ENCODE measurements at regions of chr17 and their contacts with region 1.

Region 1: DNA sequence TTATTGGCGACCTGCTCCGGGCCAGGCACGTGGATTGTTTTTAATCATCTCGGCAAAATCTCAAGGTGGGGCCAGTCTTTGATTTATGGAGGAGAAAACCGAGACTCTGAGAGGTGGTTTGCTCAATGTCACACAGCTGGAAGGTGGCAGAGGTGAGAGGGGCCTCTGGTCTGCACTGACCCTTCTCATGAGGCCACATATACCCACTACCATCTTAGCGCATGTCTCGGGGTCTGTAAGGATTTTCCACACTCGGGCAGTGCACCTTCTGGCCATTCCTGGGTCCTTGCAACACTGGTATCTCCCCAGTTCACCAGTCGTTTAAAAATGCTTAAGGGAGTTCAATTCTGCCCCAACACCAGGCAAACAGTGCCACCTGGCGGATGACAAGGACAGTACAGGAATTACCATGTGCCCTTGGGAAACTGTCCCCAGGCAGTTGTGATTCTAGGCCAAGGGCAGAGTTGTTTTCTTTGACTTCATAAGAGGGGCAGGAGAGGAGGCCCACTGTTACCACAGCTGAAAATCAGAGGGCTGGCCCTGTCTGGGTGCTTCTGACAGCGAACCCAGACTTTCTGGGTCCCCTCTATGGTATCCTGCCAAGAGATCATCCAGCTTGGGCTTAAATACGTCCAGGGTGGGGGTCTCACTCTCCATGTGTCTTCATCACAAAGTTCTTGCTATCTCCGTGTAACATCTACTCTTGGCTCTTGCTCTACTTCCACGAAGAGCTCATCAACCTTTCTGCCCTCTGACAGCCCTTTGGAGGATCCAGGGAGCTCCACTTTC is 39.4 kb upstream of the RAI1 start:
- DNase-seq: peak; percentile 74
- H3K4me3 ChIP-seq: peak overlapping the region in 1 of 2 experiments; percentile 30; a peak in 1 of 4 replicates
- H3K27ac ChIP-seq: no peak overlapping the region
- H3K4me1 ChIP-seq: no peaks in the 10 kb centered on the region; a peak in 1 of 4 replicates
- H3K27me3 ChIP-seq: no peaks in the 10 kb centered on the region
- CTCF ChIP-seq: peak; percentile 86
- EP300 ChIP-seq: no peak
- RAD21 ChIP-seq: peak; percentile 97

Region 2: DNA sequence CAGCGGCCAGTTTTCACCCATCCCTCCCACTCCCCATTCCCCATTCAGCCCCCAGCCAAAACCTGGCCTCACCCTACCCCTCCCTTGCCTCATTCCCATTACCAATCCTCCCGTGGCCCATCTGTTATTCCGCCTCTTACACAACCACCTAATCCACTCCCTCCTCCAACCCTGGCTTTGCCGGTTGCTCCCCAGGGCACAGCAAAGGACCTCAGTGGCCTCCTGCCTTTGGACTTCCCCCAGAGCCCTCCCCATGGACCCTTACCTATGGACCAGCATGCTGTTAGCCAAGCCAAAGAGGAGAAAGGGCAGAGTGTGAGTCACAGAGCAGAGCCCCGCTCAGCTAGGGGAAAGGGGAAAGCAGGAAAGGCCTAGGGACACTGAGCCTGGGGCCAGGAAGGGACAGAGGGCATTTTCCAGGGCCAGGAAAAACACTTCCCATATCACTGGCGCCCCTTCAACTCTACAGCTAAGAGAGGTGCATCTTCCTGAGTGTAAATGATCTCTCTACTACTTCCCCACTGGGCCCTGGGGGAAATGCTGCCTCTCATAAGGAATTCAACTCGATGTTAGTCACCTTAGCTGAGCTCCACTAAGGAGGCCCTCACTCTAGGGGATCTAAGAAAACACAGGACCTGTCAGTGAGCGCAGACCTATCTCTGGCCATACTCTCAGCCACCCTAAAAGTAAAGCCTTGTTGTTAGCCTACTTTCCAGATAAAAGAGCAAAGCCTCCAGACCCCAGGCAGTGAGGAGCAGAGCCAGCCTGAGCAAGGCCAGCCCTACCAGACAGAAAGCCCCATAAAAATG is 60.9 kb before region 1 on chr17:
- CTCF ChIA-PET with region 1: interaction called, 12 read pairs
- POLR2A ChIA-PET with region 1: no interaction called
- DNase-seq: no peak
- H3K4me3 ChIP-seq: no peak overlapping the region
- H3K27ac ChIP-seq: no peak overlapping the region
- H3K4me1 ChIP-seq: peaks cover 0 to 24% of the 10 kb centered on the region in 2 experiments; a peak in 1 of 4 replicates
- H3K27me3 ChIP-seq: no peaks in the 10 kb centered on the region
- CTCF ChIP-seq: no peak
- EP300 ChIP-seq: no peak
- RAD21 ChIP-seq: no peak

Region 3: GRCh38 chr17:17591355-17592298 is 50.2 kb before region 1 on chr17 and contains the start of gene PEMT:
- CTCF ChIA-PET with region 1: interaction called, 19 read pairs
- POLR2A ChIA-PET with region 1: no interaction called
- DNase-seq: peak; percentile 96
- H3K4me3 ChIP-seq: peak within 1 kb of the TSS; percentile 85 to 88
- H3K27ac ChIP-seq: peak within 1 kb of the TSS; percentile 77 to 92
- H3K4me1 ChIP-seq: peaks cover 4 to 21% of the 10 kb centered on the region in 2 experiments; a peak in 1 of 4 replicates
- H3K27me3 ChIP-seq: no peaks in the 10 kb centered on the region
- CTCF ChIP-seq: no peak
- EP300 ChIP-seq: no peak
- RAD21 ChIP-seq: no peak
- polyA plus RNA-seq, gene PEMT: 49.8 and 52.8 TPM in 2 replicates

Region 4: DNA sequence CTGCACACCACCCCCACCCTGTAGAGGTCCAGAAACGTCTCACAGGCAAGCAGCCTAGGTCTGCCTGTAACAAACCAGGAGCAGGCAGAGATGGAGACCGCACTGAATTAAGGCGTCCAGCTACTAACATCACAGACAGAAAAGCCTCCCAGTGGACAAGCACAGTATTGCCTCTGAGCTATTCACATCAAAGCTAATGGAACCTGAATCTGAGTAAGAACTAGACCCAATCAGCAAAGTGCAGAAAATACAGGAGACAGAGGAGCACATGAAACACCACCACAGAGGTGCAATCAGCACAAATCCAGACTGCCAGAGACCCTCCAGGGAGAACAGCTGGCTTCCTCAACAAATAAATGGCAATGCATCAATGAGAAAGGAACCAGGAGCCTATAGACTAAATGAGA is 28.1 kb before region 1 on chr17:
- CTCF ChIA-PET with region 1: interaction called, 27 read pairs
- POLR2A ChIA-PET with region 1: no interaction called
- DNase-seq: peak; percentile 70
- H3K4me3 ChIP-seq: no peak overlapping the region
- H3K27ac ChIP-seq: no peak overlapping the region
- H3K4me1 ChIP-seq: no peaks in the 10 kb centered on the region
- H3K27me3 ChIP-seq: no peaks in the 10 kb centered on the region
- CTCF ChIP-seq: peak; percentile 68
- EP300 ChIP-seq: no peak
- RAD21 ChIP-seq: peak; percentile 71

Region 5: GRCh38 chr17:17653343-17653742 is 11.5 kb after region 1 on chr17:
- CTCF ChIA-PET with region 1: interaction called, 21 read pairs
- POLR2A ChIA-PET with region 1: no interaction called
- DNase-seq: no peak
- H3K4me3 ChIP-seq: no peak overlapping the region
- H3K27ac ChIP-seq: no peak overlapping the region
- H3K4me1 ChIP-seq: no peaks in the 10 kb centered on the region; a peak in 1 of 4 replicates
- H3K27me3 ChIP-seq: no peaks in the 10 kb centered on the region
- CTCF ChIP-seq: no peak
- EP300 ChIP-seq: no peak
- RAD21 ChIP-seq: no peak

Region 6: GRCh38 chr17:17663160-17664063 is 21.6 kb after region 1 on chr17:
- CTCF ChIA-PET with region 1: interaction called, 14 read pairs
- POLR2A ChIA-PET with region 1: no interaction called
- DNase-seq: peak; percentile 92
- H3K4me3 ChIP-seq: no peak overlapping the region
- H3K27ac ChIP-seq: peak overlapping the region in 1 of 2 experiments; percentile 24; a peak in 2 of 4 replicates
- H3K4me1 ChIP-seq: peaks cover 0 to 12% of the 10 kb centered on the region in 2 experiments; a peak in 1 of 4 replicates
- H3K27me3 ChIP-seq: no peaks in the 10 kb centered on the region
- CTCF ChIP-seq: no peak
- EP300 ChIP-seq: no peak
- RAD21 ChIP-seq: no peak

Measured in SK-N-SH (cell line).